AG04449 (cell line): ENCODE measurements at regions of chr1 and their contacts with region 1.

Region 1: GRCh38 chr1:35451125-35451528 is 106.1 kb downstream of the KIAA0319L start:
- DNase-seq: no peak
- H3K4me3 ChIP-seq: no peak overlapping the region
- CTCF ChIP-seq: peak; percentile 88

Region 2: GRCh38 chr1:35470977-35471613 is 20.0 kb after region 1 on chr1:
- CTCF ChIA-PET with region 1: interaction called, 12 read pairs
- POLR2A ChIA-PET with region 1: interaction called, 3 read pairs
- DNase-seq: no peak
- H3K4me3 ChIP-seq: no peak overlapping the region
- CTCF ChIP-seq: no peak

Region 3: DNA sequence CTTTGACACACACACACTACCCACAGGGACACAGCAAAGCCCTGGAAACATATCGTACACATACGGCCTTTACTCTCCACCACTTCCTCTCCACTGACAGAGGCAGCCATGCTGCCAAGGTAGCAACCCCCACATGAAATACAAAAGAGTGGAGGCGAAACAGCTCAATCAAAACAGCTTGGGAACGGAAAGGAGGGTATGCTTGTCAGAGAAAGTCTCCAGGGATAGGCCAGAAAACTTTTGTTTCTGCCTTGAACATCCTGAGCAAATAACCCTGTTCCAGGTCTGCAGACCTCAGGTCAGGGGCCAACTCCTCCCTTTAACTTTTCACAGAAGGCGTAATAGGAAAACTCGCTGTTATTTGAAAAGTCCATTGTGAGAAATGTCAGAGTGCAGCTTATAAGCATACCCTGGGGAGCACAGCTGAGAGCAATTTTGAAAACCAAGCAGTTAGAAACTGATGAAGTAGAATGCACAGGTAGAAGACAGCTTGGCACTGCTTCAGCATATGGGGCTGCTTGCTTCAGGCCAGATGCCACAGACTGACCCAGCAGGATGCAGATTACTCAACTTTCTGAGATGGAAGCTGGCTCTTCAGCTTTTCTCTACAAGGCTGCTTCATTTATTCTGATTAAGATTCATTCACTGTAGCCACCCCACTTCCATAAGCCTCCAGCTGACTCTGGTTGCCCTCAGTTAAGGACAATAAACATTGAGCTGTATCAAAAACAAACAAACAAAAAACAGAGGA is 88.1 kb after region 1 on chr1:
- CTCF ChIA-PET with region 1: interaction called, 25 read pairs
- POLR2A ChIA-PET with region 1: no interaction called
- DNase-seq: no peak
- H3K4me3 ChIP-seq: no peak overlapping the region; the same call in 1 of the 2 replicates
- CTCF ChIP-seq: no peak

Region 4: DNA sequence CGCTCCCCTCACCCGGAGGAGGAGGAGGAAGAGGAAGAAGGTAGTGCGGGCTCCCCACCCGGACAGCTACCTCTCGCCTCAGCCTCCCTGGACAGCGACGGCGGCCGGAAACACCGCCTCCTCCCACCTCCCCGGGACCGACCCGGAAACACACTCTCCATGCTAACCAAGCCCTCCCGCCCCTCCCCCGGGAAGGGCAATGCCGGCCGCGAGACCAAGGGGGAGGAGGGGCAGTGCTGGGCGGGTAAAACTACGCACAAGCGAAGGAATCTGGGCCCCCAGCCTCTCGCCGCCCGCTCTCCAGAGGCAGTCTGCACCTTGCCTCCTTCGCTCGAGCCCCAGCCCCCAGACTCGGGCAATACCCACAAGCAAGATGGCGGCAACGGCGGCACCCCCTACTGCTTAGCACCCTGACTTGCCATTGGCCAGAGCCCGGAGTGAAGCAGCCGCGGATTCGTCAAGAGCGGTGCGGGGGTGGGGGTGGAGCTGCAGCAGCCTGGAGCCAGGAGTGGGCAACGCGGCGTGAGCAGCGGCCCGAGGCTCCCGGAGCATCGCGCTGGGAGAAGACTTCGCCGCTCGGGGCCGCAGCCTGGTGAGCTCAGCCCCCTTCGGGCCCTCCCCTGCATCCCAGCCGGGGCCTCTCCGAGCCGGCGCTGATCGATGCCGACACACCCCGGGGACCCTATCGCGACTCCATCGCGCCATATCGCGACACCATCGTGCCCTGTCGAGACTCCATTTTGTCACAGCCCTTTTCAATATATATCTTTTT is 106.4 kb after region 1 on chr1 and contains the starts of genes KIAA0319L and NCDN:
- CTCF ChIA-PET with region 1: interaction called, 222 read pairs
- POLR2A ChIA-PET with region 1: interaction called, 3 read pairs
- DNase-seq: peak; percentile 86
- H3K4me3 ChIP-seq: peak within 1 kb of the TSS; percentile 97
- CTCF ChIP-seq: no peak

Region 5: GRCh38 chr1:35769188-35769758 is 318.1 kb after region 1 on chr1:
- CTCF ChIA-PET with region 1: interaction called, 79 read pairs
- POLR2A ChIA-PET with region 1: no interaction called
- DNase-seq: no peak
- H3K4me3 ChIP-seq: peak overlapping the region; percentile 81
- CTCF ChIP-seq: no peak